Posterior cingulate gyrus (tissue), 11 donors: ENCODE measurements at regions of chr10 and their contacts with region 1.

Region 1: GRCh38 chr10:74081192-74081803 is 69.3 kb downstream of the AP3M1 start:
- DNase-seq: peak in 6 of 10 donors; percentile 23 to 91 (median 47)

Region 2: GRCh38 chr10:73997787-73998622 is 83.3 kb before region 1 on chr10 and contains the start of gene VCL:
- intact Hi-C with region 1: loop called (anchors 5 kb)
- DNase-seq: peak; percentile 93 to 100 (median 96)